ENCODE measurements at regions of chr5 and their contacts with region 1.

Region 1: GRCh38 chr5:76785487-76785886 is 33.3 kb upstream of the F2RL1 start:
- DNase-seq: peak; percentile 78
- H3K4me3 Mint-ChIP-seq: peak overlapping the region; percentile 20
- H3K27ac Mint-ChIP-seq: peak overlapping the region; percentile 58
- H3K4me1 Mint-ChIP-seq: peaks cover 58% of the 10 kb centered on the region
- H3K27me3 Mint-ChIP-seq: no peaks in the 10 kb centered on the region
- CTCF ChIP-seq: no peak

Region 2: GRCh38 chr5:76819841-76820525 is 34.5 kb after region 1 on chr5:
- CTCF ChIA-PET with region 1: interaction called, 5 read pairs
- intact Hi-C with region 1: loop called (anchors 2 kb)
- DNase-seq: peak; percentile 24
- H3K4me3 Mint-ChIP-seq: peak overlapping the region; percentile 99
- H3K27ac Mint-ChIP-seq: peak overlapping the region; percentile 93
- H3K4me1 Mint-ChIP-seq: peaks cover 30% of the 10 kb centered on the region
- H3K27me3 Mint-ChIP-seq: no peaks in the 10 kb centered on the region
- CTCF ChIP-seq: no peak

Measured in Calu3 (cell line).